ENCODE measurements at regions of chr6 and their contacts with region 1.

Region 1: GRCh38 chr6:107114213-107114905 is 956 bp downstream of the BEND3 start:
- H3K4me3 ChIP-seq: peak overlapping the region; percentile 74
- H3K27ac ChIP-seq: peak overlapping the region; percentile 83
- H3K4me1 ChIP-seq: peaks cover 4% of the 10 kb centered on the region; the same call in 1 of the 2 replicates
- CTCF ChIP-seq: 0 out of 2 replicates have a peak, but pooled peaks have one; percentile 29

Region 2: DNA sequence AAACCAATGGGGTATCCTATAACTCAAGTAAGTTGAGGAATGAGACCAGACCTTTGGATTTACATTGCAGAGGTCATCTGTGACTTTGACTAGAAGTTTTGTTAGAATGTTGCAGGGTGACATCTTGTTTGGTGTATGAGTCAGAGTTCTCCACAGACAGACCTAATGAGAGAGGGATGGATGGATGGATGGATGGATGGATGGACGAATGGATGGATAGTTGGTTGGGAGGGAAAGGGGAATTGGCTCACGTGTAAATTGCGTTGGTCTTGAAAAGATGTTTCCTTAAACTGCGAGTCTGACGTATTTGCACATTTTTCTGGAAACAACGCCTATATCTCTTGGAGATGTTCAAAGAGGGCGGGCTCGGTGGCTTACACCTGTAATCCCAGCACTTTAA is 87.4 kb before region 1 on chr6:
- CTCF ChIA-PET with region 1: interaction called, 11 read pairs
- POLR2A ChIA-PET with region 1: interaction called, 10 read pairs
- H3K4me3 ChIP-seq: no peak overlapping the region
- H3K27ac ChIP-seq: no peak overlapping the region
- H3K4me1 ChIP-seq: no peaks in the 10 kb centered on the region
- CTCF ChIP-seq: no peak

Region 3: GRCh38 chr6:107102414-107102990 is 11.9 kb before region 1 on chr6:
- CTCF ChIA-PET with region 1: interaction called, 11 read pairs
- POLR2A ChIA-PET with region 1: interaction called, 4 read pairs
- H3K4me3 ChIP-seq: no peak overlapping the region
- H3K27ac ChIP-seq: no peak overlapping the region
- H3K4me1 ChIP-seq: peaks cover 3% of the 10 kb centered on the region
- CTCF ChIP-seq: no peak

Measured in HEK293 (cell line).